ENCODE measurements at regions of chr2 and their contacts with region 1.

Region 1: DNA sequence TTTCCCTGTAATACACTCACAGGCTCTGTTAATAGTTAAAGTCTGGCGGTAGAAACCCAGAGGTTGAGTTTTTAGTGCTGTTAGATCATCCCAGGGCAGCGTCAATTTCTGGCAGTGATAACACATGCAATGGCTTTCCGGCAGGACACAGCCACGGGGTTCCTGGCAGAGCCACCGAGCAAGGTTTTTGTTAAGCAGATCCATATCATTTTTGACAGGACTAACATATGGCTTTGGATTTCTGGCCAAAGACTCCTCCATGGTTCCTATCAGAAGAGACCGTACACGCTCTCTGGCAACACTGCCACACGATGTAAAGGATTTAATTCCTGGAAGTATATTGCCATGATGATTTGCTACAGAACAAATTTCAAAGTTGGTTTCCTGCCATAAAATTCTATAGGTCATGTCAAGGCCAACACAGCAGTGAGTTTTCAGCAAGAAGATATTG is 854.3 kb downstream of the LRRTM4 start:
- H3K4me3 Mint-ChIP-seq: no peak overlapping the region
- H3K27ac Mint-ChIP-seq: no peak overlapping the region
- H3K4me1 Mint-ChIP-seq: no peaks in the 10 kb centered on the region
- H3K27me3 Mint-ChIP-seq: no peaks in the 10 kb centered on the region

Region 2: GRCh38 chr2:76027761-76028160 is 640.1 kb before region 1 on chr2:
- intact Hi-C with region 1: loop called (anchors 5 kb)
- H3K4me3 Mint-ChIP-seq: no peak overlapping the region
- H3K27ac Mint-ChIP-seq: no peak overlapping the region
- H3K4me1 Mint-ChIP-seq: no peaks in the 10 kb centered on the region
- H3K27me3 Mint-ChIP-seq: no peaks in the 10 kb centered on the region